ENCODE measurements at regions of chr2 and their contacts with region 1.

Region 1: GRCh38 chr2:112692496-112692911 is 28.3 kb upstream of the NT5DC4 start:
- DNase-seq: peak; percentile 87
- ATAC-seq: peak; percentile 94
- H3K4me3 ChIP-seq: no peak overlapping the region
- H3K27ac ChIP-seq: peak overlapping the region; percentile 76
- H3K4me1 ChIP-seq: peaks cover 32% of the 10 kb centered on the region
- H3K27me3 ChIP-seq: no peaks in the 10 kb centered on the region
- CTCF ChIP-seq: no peak
- EP300 ChIP-seq: peak; percentile 68 to 79
- POLR2A ChIP-seq: peak; percentile 64
- RAD21 ChIP-seq: no peak

Region 2: DNA sequence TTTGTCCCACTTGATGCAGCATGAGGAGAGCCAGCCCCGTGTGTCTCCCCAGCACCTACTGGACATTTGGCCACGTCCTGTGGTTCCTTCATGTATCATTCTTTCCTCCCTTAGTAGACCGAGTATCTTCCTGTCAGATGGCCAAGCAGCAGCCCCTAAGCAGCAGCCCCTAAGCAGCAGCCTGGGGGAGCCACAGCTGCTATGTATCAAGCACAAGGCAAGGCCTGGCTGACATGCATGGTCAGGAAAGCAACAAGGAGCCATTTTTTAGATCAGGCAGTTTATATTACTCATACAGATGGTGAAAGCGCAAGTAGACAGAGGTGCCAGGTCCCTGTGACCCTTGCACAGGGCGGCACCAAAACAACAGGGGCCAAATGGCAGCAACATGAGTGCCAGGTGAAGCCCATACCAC is 86.0 kb before region 1 on chr2:
- CTCF ChIA-PET with region 1: interaction called, 24 read pairs
- POLR2A ChIA-PET with region 1: no interaction called
- RAD21 ChIA-PET with region 1: no interaction called
- SMC1A ChIA-PET with region 1: interaction called, 5 read pairs
- in situ Hi-C with region 1: no loop called
- intact Hi-C with region 1: no loop called
- DNase-seq: no peak
- ATAC-seq: peak; percentile 20; the same call in 1 of the 3 replicates
- H3K4me3 ChIP-seq: no peak overlapping the region
- H3K27ac ChIP-seq: no peak overlapping the region
- H3K4me1 ChIP-seq: no peaks in the 10 kb centered on the region
- H3K27me3 ChIP-seq: no peaks in the 10 kb centered on the region
- CTCF ChIP-seq: no peak
- EP300 ChIP-seq: no peak
- POLR2A ChIP-seq: no peak
- RAD21 ChIP-seq: no peak

Region 3: DNA sequence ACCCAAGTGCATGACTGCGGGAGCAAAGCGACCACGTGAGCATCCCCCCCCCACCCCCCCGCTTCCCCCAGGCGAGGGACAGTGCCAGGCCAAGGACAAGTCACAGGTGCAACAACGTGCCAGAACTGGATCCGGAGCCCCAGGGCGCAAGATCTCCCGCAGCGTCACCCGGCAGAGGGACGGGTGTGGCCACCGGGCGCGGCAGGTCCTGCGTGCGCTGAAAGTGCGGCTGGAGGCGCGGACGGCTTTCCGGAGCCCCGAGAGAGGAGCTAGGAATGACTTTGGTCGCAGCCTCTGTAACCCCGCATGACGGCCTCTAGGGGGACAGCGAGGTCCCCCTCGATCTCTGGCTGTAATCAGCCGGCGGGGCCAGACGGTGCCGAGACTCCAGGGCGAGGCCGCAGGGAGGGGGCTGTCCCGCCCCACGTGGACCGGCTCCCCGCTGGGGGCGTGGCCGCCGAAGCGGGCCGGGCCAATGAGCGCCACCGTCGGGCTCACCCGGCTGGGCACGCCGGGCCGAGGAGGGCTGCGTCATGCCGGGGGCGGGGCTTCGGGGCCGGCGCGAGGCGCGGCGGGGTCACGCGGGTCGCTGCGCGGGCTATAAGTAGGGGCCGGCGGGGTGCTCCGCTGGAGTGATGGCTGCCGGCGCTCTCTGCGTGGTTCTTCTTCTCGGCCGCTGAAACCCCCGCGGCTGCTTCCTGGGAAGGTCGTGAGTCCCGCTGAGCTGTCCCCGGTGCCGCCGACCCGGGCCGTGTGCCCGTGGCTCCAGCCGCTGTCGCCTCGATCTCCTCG is 47.0 kb before region 1 on chr2 and contains the start of gene SLC20A1:
- CTCF ChIA-PET with region 1: interaction called, 41 read pairs
- POLR2A ChIA-PET with region 1: interaction called, 7 read pairs
- RAD21 ChIA-PET with region 1: interaction called, 19 read pairs
- SMC1A ChIA-PET with region 1: interaction called, 49 read pairs
- in situ Hi-C with region 1: no loop called
- intact Hi-C with region 1: loop called (anchors 1 kb)
- DNase-seq: peak; percentile 74
- ATAC-seq: peak; percentile 94
- H3K4me3 ChIP-seq: peak within 1 kb of the TSS; percentile 89
- H3K27ac ChIP-seq: peak within 1 kb of the TSS; percentile 87
- H3K4me1 ChIP-seq: peaks cover 6% of the 10 kb centered on the region
- H3K27me3 ChIP-seq: peaks cover 0 to 2% of the 10 kb centered on the region in 2 experiments; a peak in 1 of 4 replicates
- CTCF ChIP-seq: peak; percentile 42 to 62 (median 52)
- EP300 ChIP-seq: 0 out of 4 replicates have a peak, but pooled peaks of 1 of the 2 experiments have one; percentile 32
- POLR2A ChIP-seq: peak; percentile 99
- RAD21 ChIP-seq: peak; percentile 54
- polyA plus RNA-seq, gene SLC20A1: 21.2 to 22.6 TPM

Region 4: DNA sequence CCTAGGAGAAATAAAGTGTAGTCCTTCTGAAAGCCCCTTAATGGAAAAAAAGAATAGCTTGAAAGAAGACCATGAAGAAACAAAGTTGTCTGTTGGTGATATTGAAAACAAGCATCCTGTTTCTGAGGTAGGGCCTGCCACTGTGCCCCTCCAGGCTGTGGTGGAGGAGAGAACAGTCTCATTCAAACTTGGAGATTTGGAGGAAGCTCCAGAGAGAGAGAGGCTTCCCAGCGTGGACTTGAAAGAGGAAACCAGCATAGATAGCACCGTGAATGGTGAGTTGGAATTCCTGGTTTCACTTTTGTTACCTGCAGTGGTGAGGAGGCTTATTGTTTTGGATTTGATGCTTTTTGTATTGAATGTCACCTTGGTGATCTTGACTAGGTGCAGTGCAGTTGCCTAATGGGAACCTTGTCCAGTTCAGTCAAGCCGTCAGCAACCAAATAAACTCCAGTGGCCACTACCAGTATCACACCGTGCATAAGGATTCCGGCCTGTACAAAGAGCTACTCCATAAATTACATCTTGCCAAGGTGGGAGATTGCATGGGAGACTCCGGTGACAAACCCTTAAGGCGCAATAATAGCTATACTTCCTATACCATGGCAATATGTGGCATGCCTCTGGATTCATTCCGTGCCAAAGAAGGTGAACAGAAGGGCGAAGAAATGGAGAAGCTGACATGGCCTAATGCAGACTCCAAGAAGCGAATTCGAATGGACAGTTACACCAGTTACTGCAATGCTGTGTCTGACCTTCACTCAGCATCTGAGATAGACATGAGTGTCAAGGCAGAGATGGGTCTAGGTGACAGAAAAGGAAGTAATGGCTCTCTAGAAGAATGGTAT is 33.5 kb before region 1 on chr2:
- CTCF ChIA-PET with region 1: interaction called, 8 read pairs
- POLR2A ChIA-PET with region 1: interaction called, 10 read pairs
- RAD21 ChIA-PET with region 1: interaction called, 6 read pairs
- SMC1A ChIA-PET with region 1: interaction called, 21 read pairs
- in situ Hi-C with region 1: no loop called
- intact Hi-C with region 1: no loop called
- DNase-seq: no peak
- ATAC-seq: no peak
- H3K4me3 ChIP-seq: peak overlapping the region; percentile 6; the same call in 1 of the 2 replicates
- H3K27ac ChIP-seq: no peak overlapping the region; the same call in 1 of the 2 replicates
- H3K4me1 ChIP-seq: peaks cover 21% of the 10 kb centered on the region
- H3K27me3 ChIP-seq: no peaks in the 10 kb centered on the region
- CTCF ChIP-seq: no peak
- EP300 ChIP-seq: no peak
- POLR2A ChIP-seq: no peak; the same call in 1 of the 2 replicates
- RAD21 ChIP-seq: no peak

Region 5: DNA sequence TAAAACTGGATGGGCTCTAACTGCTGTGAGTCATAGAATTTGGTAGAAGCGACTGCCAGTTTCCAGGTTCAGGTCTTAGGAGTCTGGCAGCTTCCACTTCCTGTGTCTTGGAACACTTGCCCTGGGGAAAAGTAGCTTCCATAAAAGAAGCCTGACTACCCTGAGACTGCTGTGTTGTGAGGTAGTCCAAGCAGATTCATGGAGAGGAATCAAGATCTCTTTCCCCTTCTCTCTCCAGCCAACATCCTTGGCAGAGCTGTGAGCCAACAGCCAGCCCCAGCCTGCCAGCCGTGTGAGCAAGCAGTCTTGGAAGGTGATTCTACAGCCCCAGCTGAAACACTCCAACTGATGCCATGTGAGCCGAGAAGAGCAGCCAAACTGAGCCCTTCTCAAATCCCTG is 13.0 kb before region 1 on chr2:
- CTCF ChIA-PET with region 1: interaction called, 7 read pairs
- POLR2A ChIA-PET with region 1: interaction called, 8 read pairs
- RAD21 ChIA-PET with region 1: interaction called, 3 read pairs
- SMC1A ChIA-PET with region 1: interaction called, 18 read pairs
- in situ Hi-C with region 1: no loop called
- intact Hi-C with region 1: no loop called
- DNase-seq: no peak
- ATAC-seq: no peak
- H3K4me3 ChIP-seq: no peak overlapping the region
- H3K27ac ChIP-seq: no peak overlapping the region
- H3K4me1 ChIP-seq: peaks cover 7% of the 10 kb centered on the region
- H3K27me3 ChIP-seq: no peaks in the 10 kb centered on the region
- CTCF ChIP-seq: no peak
- EP300 ChIP-seq: no peak
- POLR2A ChIP-seq: no peak
- RAD21 ChIP-seq: no peak

Region 6: DNA sequence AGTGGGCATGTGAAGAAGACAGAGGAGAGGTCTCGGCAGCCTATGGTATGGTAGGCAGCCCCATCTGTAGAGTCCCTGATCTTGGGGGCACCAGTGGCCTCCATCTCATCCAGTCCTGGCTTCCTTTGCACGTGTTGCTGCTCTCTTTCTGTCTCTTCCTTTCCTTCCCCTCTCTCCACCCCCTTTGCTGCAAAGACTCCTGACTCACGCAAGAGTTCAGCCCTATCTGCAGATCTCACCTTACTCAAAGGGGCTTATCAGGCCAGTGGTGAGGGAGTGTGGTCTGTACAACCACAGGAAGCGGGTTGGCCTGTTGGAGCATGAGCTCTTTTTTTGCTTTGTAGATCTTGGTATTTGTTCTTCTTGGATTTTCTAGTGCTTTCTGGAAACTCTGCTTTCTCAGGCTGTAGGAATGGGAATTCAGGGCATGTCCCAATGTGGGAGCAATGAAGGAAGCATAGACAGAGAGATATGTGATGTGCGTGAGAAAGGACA is 13.7 kb after region 1 on chr2:
- CTCF ChIA-PET with region 1: interaction called, 57 read pairs
- POLR2A ChIA-PET with region 1: interaction called, 74 read pairs
- RAD21 ChIA-PET with region 1: interaction called, 145 read pairs
- SMC1A ChIA-PET with region 1: interaction called, 271 read pairs
- in situ Hi-C with region 1: no loop called
- intact Hi-C with region 1: no loop called
- DNase-seq: peak; percentile 64
- ATAC-seq: peak; percentile 63
- H3K4me3 ChIP-seq: no peak overlapping the region; the same call in 1 of the 2 replicates
- H3K27ac ChIP-seq: peak overlapping the region; percentile 94
- H3K4me1 ChIP-seq: peaks cover 53% of the 10 kb centered on the region
- H3K27me3 ChIP-seq: no peaks in the 10 kb centered on the region
- CTCF ChIP-seq: no peak
- EP300 ChIP-seq: no peak; a peak in 1 of 4 replicates
- POLR2A ChIP-seq: no peak
- RAD21 ChIP-seq: no peak

Region 7: GRCh38 chr2:112712903-112713584 is 20.5 kb after region 1 on chr2:
- CTCF ChIA-PET with region 1: interaction called, 57 read pairs
- POLR2A ChIA-PET with region 1: interaction called, 74 read pairs
- RAD21 ChIA-PET with region 1: interaction called, 145 read pairs
- SMC1A ChIA-PET with region 1: interaction called, 271 read pairs
- in situ Hi-C with region 1: no loop called
- intact Hi-C with region 1: no loop called
- DNase-seq: no peak
- ATAC-seq: no peak
- H3K4me3 ChIP-seq: no peak overlapping the region
- H3K27ac ChIP-seq: no peak overlapping the region
- H3K4me1 ChIP-seq: peaks cover 20% of the 10 kb centered on the region
- H3K27me3 ChIP-seq: no peaks in the 10 kb centered on the region
- CTCF ChIP-seq: no peak
- EP300 ChIP-seq: no peak
- POLR2A ChIP-seq: no peak
- RAD21 ChIP-seq: no peak

Measured in GM12878 (cell line).